ENCODE measurements at regions of chr11 and their contacts with region 1.

Region 1: GRCh38 chr11:8807544-8808225 is 103.3 kb upstream of the AKIP1 start:
- DNase-seq: no peak
- H3K4me3 ChIP-seq: no peak overlapping the region
- H3K27ac ChIP-seq: peak overlapping the region; percentile 33 to 93 (median 35)
- H3K4me1 ChIP-seq: peaks cover 42 to 77% of the 10 kb centered on the region in 2 donors
- H3K27me3 ChIP-seq: no peaks in the 10 kb centered on the region
- CTCF ChIP-seq: no peak
- POLR2A ChIP-seq: no peak

Region 2: GRCh38 chr11:8111636-8112035 is 696.0 kb before region 1 on chr11:
- intact Hi-C with region 1: no loop called
- DNase-seq: no peak
- H3K4me3 ChIP-seq: no peak overlapping the region
- H3K27ac ChIP-seq: no peak overlapping the region
- H3K4me1 ChIP-seq: peaks cover 7 to 23% of the 10 kb centered on the region in 2 donors
- H3K27me3 ChIP-seq: no peaks in the 10 kb centered on the region
- CTCF ChIP-seq: no peak
- POLR2A ChIP-seq: no peak

Region 3: GRCh38 chr11:8459711-8460394 is 347.8 kb before region 1 on chr11:
- intact Hi-C with region 1: no loop called
- DNase-seq: no peak
- H3K4me3 ChIP-seq: no peak overlapping the region
- H3K27ac ChIP-seq: no peak overlapping the region
- H3K4me1 ChIP-seq: no peaks in the 10 kb centered on the region
- H3K27me3 ChIP-seq: no peaks in the 10 kb centered on the region
- CTCF ChIP-seq: no peak
- POLR2A ChIP-seq: no peak

Region 4: GRCh38 chr11:8699903-8700302 is 107.8 kb before region 1 on chr11:
- intact Hi-C with region 1: loop called (anchors 10 kb)
- DNase-seq: no peak
- H3K4me3 ChIP-seq: no peak overlapping the region
- H3K27ac ChIP-seq: no peak overlapping the region
- H3K4me1 ChIP-seq: peaks cover 0 to 10% of the 10 kb centered on the region in 2 donors
- H3K27me3 ChIP-seq: no peaks in the 10 kb centered on the region
- CTCF ChIP-seq: no peak
- POLR2A ChIP-seq: no peak

Region 5: GRCh38 chr11:8928981-8929565 is 121.4 kb after region 1 on chr11:
- intact Hi-C with region 1: no loop called
- DNase-seq: no peak
- H3K4me3 ChIP-seq: no peak overlapping the region
- H3K27ac ChIP-seq: no peak overlapping the region
- H3K4me1 ChIP-seq: no peaks in the 10 kb centered on the region
- H3K27me3 ChIP-seq: no peaks in the 10 kb centered on the region
- CTCF ChIP-seq: no peak
- POLR2A ChIP-seq: no peak